Dorsolateral prefrontal cortex (tissue), 120 donors: ENCODE measurements at regions of chr10 and their contacts with region 1.

Region 1: GRCh38 chr10:89217057-89217990 is 10.2 kb upstream of the CH25H start:
- DNase-seq: peak in 4 of 10 donors; percentile 50 to 73 (median 67)
- H3K4me3 ChIP-seq: peak overlapping the region in 19 of 59 donors; percentile 1 to 34 (median 16)
- H3K27ac ChIP-seq: peak overlapping the region in 58 of 59 donors; percentile 21 to 99 (median 90)
- H3K27me3 ChIP-seq: no peaks in the 10 kb centered on the region
- CTCF ChIP-seq: peak; percentile 78 to 99 (median 88)

Region 2: GRCh38 chr10:88835096-88835909 is 382.0 kb before region 1 on chr10:
- intact Hi-C with region 1: loop called in 1 of 2 experiments (anchors 5 kb)
- DNase-seq: peak; percentile 61 to 86 (median 80)
- H3K4me3 ChIP-seq: no peak overlapping the region
- H3K27ac ChIP-seq: peak overlapping the region in 1 of 59 donors; percentile 16
- H3K27me3 ChIP-seq: no peaks in the 10 kb centered on the region
- CTCF ChIP-seq: peak; percentile 82 to 99 (median 91)

Region 3: GRCh38 chr10:89029785-89030437 is 187.4 kb before region 1 on chr10:
- intact Hi-C with region 1: loop called in 1 of 2 experiments (anchors 2 kb)
- DNase-seq: peak; percentile 35 to 89 (median 78)
- H3K4me3 ChIP-seq: peak overlapping the region in 4 of 59 donors; percentile 5 to 35 (median 26)
- H3K27ac ChIP-seq: peak overlapping the region in 5 of 59 donors; percentile 3 to 23 (median 11)
- H3K27me3 ChIP-seq: no peaks in the 10 kb centered on the region
- CTCF ChIP-seq: peak; percentile 86 to 99 (median 96)

Region 4: DNA sequence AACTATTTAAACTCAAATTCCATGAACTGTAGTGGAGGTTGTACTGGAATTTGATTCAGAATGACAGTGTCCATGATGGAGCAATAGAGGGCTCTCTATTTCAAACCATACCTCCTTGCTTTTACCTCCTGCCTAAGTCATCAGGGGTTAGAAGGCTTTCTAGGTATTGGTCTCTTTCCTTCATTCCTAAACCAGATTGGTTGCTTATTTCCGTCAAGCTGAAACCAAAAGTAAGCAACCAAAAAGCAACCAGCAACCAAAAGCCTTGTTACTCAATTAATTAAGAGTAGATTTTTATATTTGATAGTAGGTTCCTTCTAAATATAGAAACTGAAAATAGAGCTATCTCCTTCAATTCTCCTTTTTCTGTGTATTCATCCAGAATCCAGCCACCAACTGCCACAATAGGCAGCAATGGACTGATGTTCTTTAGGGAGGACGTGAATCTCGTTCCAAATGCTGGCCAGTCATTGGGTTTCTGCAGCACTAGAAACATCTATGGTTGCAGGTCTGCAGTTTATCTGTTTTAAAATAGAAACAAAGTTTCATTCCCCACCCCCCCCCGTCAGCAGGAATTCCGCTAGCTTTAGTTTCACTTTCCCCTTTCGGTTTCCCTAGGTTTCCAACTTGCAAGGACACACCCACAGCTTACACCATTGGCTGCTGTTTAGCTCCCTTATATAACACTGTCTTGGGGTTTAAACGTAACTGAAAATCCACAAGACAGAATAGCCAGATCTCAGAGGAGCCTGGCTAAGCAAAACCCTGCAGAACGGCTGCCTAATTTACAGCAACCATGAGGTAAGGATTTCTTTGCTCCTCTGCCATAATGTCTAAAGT is 174.8 kb after region 1 on chr10 and contains the start of gene IFIT1:
- intact Hi-C with region 1: loop called in 1 of 2 experiments (anchors 5 kb)
- DNase-seq: peak in 6 of 10 donors; percentile 40 to 65 (median 55)
- H3K4me3 ChIP-seq: peak within 1 kb of the TSS; percentile 41 to 84 (median 68)
- H3K27ac ChIP-seq: peak within 1 kb of the TSS; percentile 11 to 98 (median 93)
- H3K27me3 ChIP-seq: no peaks in the 10 kb centered on the region
- CTCF ChIP-seq: peak in 9 of 56 donors; percentile 2 to 41 (median 15)
- total RNA-seq, gene IFIT1: 23.2 to 313 (median 49.2) TPM

Region 5: DNA sequence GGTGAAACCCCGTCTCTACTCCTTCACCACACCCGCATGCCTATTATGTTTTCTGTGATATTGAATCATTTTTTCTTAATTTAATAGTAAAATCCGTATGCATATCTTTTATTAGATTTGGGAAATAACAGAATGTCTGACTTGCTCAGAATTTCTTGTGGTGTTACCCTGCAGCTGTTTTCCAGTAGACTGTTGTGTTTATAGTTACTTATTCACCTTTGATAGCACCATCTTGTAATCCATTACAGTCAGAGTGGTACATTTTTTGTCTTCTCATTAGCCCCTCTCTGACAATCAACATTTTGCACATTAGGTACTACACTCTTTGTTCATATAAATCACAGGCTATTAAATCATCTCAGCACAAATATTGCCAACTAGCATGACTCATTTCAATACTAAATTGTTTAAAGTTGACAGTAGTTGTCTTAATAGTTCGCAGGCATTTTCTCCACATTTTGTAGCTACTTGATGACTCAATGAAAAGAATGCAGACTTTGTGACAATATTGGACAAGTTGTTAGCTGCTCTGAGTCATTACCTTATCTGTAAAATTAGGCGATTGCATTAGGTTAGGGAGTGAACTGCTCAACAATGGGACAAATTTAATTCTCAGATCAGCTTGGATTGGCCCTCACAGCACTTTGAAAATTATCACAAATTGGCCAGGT is 335.9 kb after region 1 on chr10:
- intact Hi-C with region 1: no loop called
- DNase-seq: no peak
- H3K4me3 ChIP-seq: no peak overlapping the region
- H3K27ac ChIP-seq: no peak overlapping the region
- H3K27me3 ChIP-seq: peaks cover 0 to 12% (median 0%) of the 10 kb centered on the region in 45 donors
- CTCF ChIP-seq: no peak

Region 6: GRCh38 chr10:89563861-89564478 is 346.6 kb after region 1 on chr10:
- intact Hi-C with region 1: loop called in 1 of 2 experiments (anchors 5 kb)
- DNase-seq: peak in 1 of 10 donors; percentile 13
- H3K4me3 ChIP-seq: no peak overlapping the region
- H3K27ac ChIP-seq: no peak overlapping the region
- H3K27me3 ChIP-seq: no peaks in the 10 kb centered on the region
- CTCF ChIP-seq: peak; percentile 67 to 92 (median 81)